Activated CD8-positive, alpha-beta T cell treated with anti-CD3 and anti-CD28 coated beads, Interleukin-2, amount 10 ng/mL, durations not matched to agents 7 days and 5 days (primary cell): ENCODE measurements at regions of chr6 and their contacts with region 1.

Region 1: DNA sequence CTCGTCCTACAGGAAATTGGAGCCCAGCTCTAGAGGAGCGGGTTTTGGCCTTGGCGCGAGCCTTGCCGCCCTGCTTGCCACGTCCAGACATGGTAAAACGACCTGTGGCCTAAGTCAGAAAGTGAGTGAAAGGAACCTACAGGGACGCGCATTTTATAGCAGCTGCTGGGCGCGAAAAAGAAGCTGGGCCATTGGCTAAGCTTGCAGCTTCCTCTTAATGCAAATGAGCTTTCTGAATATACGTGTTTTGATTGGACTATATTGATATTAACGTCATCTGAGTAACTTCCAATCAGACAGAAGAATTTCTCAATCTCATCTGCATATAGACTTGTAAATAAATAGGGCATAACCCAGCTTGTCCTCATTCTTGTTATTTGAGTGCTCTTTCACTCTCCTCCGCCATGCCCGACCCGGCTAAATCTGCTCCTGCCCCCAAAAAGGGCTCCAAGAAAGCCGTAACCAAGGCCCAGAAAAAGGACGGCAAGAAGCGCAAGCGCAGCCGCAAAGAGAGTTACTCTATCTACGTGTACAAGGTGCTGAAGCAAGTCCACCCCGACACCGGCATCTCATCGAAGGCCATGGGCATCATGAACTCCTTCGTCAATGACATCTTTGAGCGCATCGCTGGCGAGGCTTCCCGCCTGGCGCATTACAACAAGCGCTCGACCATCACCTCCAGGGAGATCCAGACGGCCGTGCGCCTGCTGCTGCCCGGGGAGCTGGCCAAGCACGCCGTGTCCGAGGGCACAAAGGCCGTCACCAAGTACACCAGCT is 18.9 kb downstream of the OR2B2 start:
- DNase-seq: peak; percentile 96
- ATAC-seq: peak; percentile 55
- H3K4me3 Mint-ChIP-seq: no peak overlapping the region
- H3K27ac Mint-ChIP-seq: no peak overlapping the region
- H3K4me1 Mint-ChIP-seq: peaks cover 56% of the 10 kb centered on the region
- H3K27me3 Mint-ChIP-seq: no peaks in the 10 kb centered on the region

Region 2: DNA sequence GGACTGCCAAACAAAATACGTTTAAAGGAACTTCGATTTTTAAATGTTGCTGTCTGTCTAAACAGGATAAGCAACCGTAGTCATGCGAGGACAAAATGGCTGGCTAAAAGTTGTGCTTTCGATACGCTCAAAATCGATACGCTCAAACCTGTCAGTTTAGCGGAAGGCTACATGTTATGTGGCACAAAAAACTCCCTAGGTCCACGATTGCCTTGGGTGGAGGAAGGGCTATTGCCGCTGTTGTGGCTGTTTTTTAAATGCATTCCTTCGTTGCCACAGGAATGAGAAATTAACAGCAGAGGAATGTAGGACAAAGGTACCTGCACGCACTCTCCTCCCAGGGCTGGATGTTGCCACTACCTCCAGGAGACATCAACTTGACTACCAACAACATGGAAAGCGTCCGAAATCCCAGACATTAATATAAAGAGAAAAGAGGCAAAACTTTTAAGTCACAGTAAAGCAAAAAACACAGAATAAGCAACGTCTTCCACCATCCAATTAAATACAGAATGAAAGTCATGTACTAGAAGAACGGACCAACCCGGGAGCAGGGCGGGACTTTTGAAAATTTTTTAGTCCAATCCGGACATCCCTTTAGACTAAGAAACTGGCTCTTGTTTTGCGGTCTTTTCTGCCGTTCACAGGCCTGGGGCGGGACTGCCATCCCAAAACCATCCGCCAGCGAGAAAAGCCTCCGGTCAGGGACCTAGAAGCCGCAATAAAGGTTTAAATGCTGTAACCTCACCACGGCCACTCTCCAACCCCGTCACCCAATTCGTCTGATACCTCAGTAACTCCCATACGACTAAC is 1838.2 kb before region 1 on chr6:
- CTCF ChIA-PET with region 1: no interaction called
- POLR2A ChIA-PET with region 1: interaction called, 17 read pairs
- DNase-seq: peak; percentile 95
- ATAC-seq: peak; percentile 72
- H3K4me3 Mint-ChIP-seq: peak overlapping the region; percentile 87
- H3K27ac Mint-ChIP-seq: peak overlapping the region; percentile 100
- H3K4me1 Mint-ChIP-seq: peaks cover 36% of the 10 kb centered on the region
- H3K27me3 Mint-ChIP-seq: no peaks in the 10 kb centered on the region

Region 3: DNA sequence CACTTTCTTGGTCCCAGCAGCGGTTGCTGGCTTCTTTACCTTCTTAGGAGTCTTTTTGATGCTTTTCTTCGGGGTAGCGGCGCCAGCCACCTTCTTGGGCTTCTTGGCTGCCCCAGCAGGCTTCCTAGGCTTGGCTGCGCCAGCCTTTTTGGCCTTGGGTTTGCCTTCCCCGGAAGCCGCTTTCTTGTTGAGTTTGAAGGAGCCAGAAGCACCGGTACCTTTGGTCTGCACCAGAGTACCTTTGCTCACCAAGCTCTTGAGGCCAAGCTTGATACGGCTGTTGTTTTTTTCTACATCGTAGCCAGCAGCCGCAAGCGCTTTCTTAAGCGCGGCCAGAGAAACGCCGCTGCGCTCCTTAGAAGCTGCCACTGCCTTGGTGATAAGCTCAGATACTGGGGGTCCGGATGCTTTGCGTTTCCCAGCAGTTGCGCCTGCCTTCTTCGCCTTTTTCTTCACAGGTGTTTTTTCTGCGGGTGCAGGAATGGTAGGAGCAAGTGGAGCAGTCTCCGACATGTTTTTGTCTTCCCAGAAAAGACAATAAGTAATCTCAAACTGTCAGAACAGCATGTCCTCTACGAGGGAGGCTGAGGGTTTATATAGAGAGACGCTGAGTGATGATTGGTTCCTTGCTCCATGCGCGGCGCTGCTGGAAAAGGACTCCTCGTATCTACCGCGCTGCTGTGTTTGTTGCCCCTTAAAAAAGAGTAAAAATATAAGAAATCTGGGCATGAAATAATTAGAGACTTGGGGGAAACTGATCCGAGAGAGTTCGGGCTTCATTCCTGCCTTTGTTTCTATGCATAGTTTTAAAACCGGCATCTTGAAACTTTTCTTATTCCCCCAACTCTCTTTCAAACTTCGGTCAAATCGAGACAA is 1658.6 kb before region 1 on chr6:
- CTCF ChIA-PET with region 1: no interaction called
- POLR2A ChIA-PET with region 1: interaction called, 17 read pairs
- DNase-seq: peak; percentile 89
- ATAC-seq: peak; percentile 64
- H3K4me3 Mint-ChIP-seq: peak overlapping the region; percentile 78
- H3K27ac Mint-ChIP-seq: peak overlapping the region; percentile 99
- H3K4me1 Mint-ChIP-seq: peaks cover 41% of the 10 kb centered on the region
- H3K27me3 Mint-ChIP-seq: no peaks in the 10 kb centered on the region

Region 4: GRCh38 chr6:27146706-27147505 is 746.3 kb before region 1 on chr6:
- CTCF ChIA-PET with region 1: interaction called, 3 read pairs
- POLR2A ChIA-PET with region 1: interaction called, 200 read pairs
- DNase-seq: peak; percentile 91
- ATAC-seq: peak; percentile 64
- H3K4me3 Mint-ChIP-seq: no peak overlapping the region
- H3K27ac Mint-ChIP-seq: no peak overlapping the region
- H3K4me1 Mint-ChIP-seq: peaks cover 35% of the 10 kb centered on the region
- H3K27me3 Mint-ChIP-seq: no peaks in the 10 kb centered on the region

Region 5: GRCh38 chr6:27809939-27810767 is 83.1 kb before region 1 on chr6:
- CTCF ChIA-PET with region 1: interaction called, 45 read pairs
- POLR2A ChIA-PET with region 1: interaction called, 1,107 read pairs
- DNase-seq: peak; percentile 89
- ATAC-seq: peak; percentile 32
- H3K4me3 Mint-ChIP-seq: peak overlapping the region; percentile 95
- H3K27ac Mint-ChIP-seq: peak overlapping the region; percentile 98
- H3K4me1 Mint-ChIP-seq: peaks cover 66% of the 10 kb centered on the region
- H3K27me3 Mint-ChIP-seq: peaks cover 2% of the 10 kb centered on the region

Region 6: GRCh38 chr6:27871924-27872638 is 21.2 kb before region 1 on chr6:
- CTCF ChIA-PET with region 1: interaction called, 109 read pairs
- POLR2A ChIA-PET with region 1: interaction called, 1,677 read pairs
- DNase-seq: peak; percentile 92
- ATAC-seq: peak; percentile 62
- H3K4me3 Mint-ChIP-seq: peak overlapping the region; percentile 85
- H3K27ac Mint-ChIP-seq: peak overlapping the region; percentile 99
- H3K4me1 Mint-ChIP-seq: peaks cover 64% of the 10 kb centered on the region
- H3K27me3 Mint-ChIP-seq: no peaks in the 10 kb centered on the region

Region 7: DNA sequence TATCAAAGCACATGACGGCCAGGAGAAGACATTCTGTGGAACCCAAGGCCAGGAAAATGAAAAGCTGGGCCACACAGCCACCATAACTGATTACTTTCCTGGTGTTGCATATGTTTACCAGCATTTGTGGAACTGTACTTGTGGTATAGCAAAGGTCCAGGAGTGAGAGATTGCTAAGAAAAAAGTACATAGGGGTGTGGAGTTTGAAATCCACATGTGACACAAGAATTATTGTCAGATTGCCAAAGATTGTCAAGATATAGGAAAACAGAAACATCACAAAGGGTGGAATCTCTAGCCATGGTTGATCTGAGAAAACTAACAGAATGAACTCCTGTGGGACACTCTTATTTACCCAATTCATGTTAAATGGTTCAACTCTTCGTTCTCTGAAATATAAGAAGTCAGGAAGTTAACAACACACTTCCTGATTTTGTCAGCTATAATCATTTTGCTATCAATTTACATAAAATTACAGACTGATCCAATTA is 18.8 kb after region 1 on chr6 and contains the start of gene OR2B2:
- CTCF ChIA-PET with region 1: no interaction called
- POLR2A ChIA-PET with region 1: no interaction called
- DNase-seq: no peak
- ATAC-seq: no peak
- H3K4me3 Mint-ChIP-seq: no peak within 1 kb of the TSS
- H3K27ac Mint-ChIP-seq: no peak within 1 kb of the TSS
- H3K4me1 Mint-ChIP-seq: no peaks in the 10 kb centered on the region
- H3K27me3 Mint-ChIP-seq: peaks cover 35% of the 10 kb centered on the region
- total RNA-seq, gene OR2B2: not detected

Region 8: DNA sequence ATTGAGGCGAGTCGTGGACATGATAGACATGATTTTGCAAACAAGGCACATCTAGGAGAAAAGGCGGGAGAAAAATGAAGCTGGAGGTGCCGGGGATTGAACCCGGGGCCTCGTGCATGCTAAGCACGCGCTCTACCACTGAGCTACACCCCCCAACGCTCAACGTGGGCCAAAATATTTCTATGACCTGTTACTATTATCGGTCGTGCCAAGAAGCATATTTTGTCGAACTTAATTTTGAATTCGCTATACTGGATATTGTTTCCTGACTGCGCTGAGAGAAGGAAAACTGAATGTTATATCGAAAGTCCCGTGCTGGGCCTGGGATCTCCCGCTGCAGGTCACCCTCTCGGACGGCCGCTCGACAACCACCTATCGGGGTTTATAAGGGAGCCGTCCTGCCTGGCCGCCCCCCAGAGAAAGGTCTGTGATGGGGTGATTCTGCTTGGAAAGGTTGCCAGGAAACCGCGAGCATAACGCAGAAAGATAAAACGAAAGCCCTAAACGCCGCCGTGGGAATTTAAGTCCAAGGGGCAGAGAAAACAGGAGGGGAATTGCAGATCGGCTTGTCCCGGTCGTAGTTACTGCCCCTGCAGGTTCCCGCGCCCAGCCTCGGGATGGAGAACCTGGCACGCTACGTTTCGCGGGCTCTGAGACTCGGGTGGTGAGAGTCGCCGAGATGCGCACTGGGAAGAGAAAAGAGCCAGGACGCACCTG is 970.5 kb after region 1 on chr6:
- CTCF ChIA-PET with region 1: no interaction called
- POLR2A ChIA-PET with region 1: interaction called, 20 read pairs
- DNase-seq: peak; percentile 90
- ATAC-seq: peak; percentile 47
- H3K4me3 Mint-ChIP-seq: peak overlapping the region; percentile 89
- H3K27ac Mint-ChIP-seq: peak overlapping the region; percentile 81
- H3K4me1 Mint-ChIP-seq: peaks cover 53% of the 10 kb centered on the region
- H3K27me3 Mint-ChIP-seq: peaks cover 7% of the 10 kb centered on the region